HepG2 (cell line): ENCODE measurements at regions of chr4 and their contacts with region 1.

Region 1: GRCh38 chr4:153466081-153466948 is at the start of gene TMEM131L:
- DNase-seq: peak; percentile 29
- ATAC-seq: peak; percentile 88
- H3K4me3 ChIP-seq: peak within 1 kb of the TSS; percentile 77 to 89 (median 86)
- H3K27ac ChIP-seq: no peak within 1 kb of the TSS
- H3K4me1 ChIP-seq: peaks cover 26% of the 10 kb centered on the region
- H3K27me3 ChIP-seq: peaks cover 0 to 12% of the 10 kb centered on the region in 2 experiments; a peak in 3 of 5 replicates
- CTCF ChIP-seq: peak; percentile 23; the same call in 1 of the 2 replicates
- EP300 ChIP-seq: no peak
- POLR2A ChIP-seq: peak; percentile 50 to 53; a peak in 3 of 4 replicates
- RAD21 ChIP-seq: no peak
- total RNA-seq, gene TMEM131L: 2.4 and 4.5 TPM in 2 replicates

Region 2: DNA sequence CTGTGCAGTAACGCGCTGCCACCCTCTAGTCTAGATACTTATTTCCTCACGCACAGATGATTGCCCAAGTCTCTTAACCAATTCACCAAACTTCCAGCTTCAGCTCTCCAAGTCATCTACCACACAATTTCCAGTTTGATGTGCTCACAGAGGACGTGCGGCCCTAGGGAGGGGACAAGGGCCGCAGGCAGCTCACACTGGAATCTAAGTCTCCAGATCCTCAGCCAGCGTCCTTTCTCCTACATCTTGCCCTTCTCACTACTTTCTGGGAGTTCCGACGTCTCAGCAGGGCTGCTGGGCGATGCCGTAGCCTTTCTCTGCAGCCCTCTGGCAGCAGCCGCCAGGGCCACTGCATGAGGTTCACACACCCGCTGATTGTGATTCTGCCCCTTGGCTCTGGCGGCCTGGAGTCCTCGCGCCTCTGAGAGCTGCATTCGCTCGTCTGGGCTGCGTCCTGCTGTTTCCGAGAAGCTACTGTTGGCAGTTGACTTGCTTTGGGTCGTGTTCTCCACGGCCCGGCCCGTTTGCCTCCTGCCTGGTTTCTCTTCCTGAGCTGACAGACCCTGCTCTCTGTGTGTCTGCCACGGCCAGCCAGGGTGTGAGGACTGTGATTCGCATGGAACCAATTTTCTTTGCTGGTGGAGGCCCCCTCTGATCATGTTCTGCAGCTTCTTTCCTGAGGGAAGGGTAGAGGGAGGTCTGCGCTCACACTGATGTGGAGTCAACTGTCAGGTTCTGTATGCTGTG is 14.2 kb before region 1 on chr4:
- CTCF ChIA-PET with region 1: no interaction called
- POLR2A ChIA-PET with region 1: interaction called, 13 read pairs
- in situ Hi-C with region 1: no loop called
- intact Hi-C with region 1: no loop called
- DNase-seq: no peak
- ATAC-seq: peak; percentile 86
- H3K4me3 ChIP-seq: peak overlapping the region in 1 of 3 experiments; percentile 41; a peak in 2 of 6 replicates
- H3K27ac ChIP-seq: no peak overlapping the region
- H3K4me1 ChIP-seq: peaks cover 37% of the 10 kb centered on the region
- H3K27me3 ChIP-seq: no peaks in the 10 kb centered on the region
- CTCF ChIP-seq: no peak
- EP300 ChIP-seq: no peak
- POLR2A ChIP-seq: peak in 1 of 2 experiments; percentile 24; a peak in 1 of 4 replicates
- RAD21 ChIP-seq: no peak

Region 3: DNA sequence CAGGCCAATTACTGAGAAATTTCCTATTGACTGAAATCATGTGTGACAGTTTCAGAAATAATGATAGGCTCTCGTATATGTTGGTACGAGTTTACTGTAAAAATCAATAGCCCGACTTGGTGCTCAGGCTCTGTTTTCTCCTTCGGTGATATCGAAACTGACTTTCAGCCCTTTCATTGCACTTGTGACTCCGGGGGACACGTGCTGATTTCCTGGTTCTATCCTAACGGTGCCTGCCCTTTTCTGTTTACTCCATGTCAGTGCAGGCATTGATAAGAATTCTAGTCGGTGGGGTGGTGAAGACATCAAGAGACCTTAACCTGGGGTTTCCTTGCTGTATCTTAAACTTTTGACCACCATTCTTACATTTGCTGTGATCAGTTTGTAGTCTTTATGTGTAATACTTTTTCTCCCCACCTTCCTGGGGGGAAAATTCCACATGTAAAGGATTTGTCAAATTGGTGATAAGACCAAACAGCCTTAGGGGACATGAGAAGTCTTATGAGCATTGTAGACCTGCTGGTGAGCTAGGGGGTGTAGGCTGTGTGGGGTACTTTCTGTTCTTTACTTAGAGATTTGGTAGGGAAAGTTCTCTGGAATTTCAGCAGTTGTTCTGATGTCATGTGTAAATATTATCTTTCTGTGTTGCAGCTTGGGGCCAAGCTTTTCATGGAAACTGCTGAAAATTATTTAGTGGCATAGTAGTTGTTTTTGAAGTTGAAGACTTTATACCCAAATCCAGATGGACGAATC is 52.5 kb after region 1 on chr4:
- CTCF ChIA-PET with region 1: no interaction called
- POLR2A ChIA-PET with region 1: no interaction called
- in situ Hi-C with region 1: no loop called
- intact Hi-C with region 1: loop called (anchors 5 kb)
- DNase-seq: peak; percentile 30
- ATAC-seq: peak; percentile 86
- H3K4me3 ChIP-seq: peak overlapping the region; percentile 29 to 40 (median 36); a peak in 5 of 6 replicates
- H3K27ac ChIP-seq: peak overlapping the region; percentile 48
- H3K4me1 ChIP-seq: peaks cover 30% of the 10 kb centered on the region
- H3K27me3 ChIP-seq: no peaks in the 10 kb centered on the region
- CTCF ChIP-seq: no peak
- EP300 ChIP-seq: no peak
- POLR2A ChIP-seq: no peak
- RAD21 ChIP-seq: no peak

Region 4: GRCh38 chr4:153555730-153556433 is 89.6 kb after region 1 on chr4:
- CTCF ChIA-PET with region 1: no interaction called
- POLR2A ChIA-PET with region 1: no interaction called
- in situ Hi-C with region 1: no loop called
- intact Hi-C with region 1: loop called (anchors 5 kb)
- DNase-seq: peak; percentile 48
- ATAC-seq: peak; percentile 54; the same call in 2 of the 3 replicates
- H3K4me3 ChIP-seq: no peak overlapping the region
- H3K27ac ChIP-seq: no peak overlapping the region
- H3K4me1 ChIP-seq: peaks cover 26% of the 10 kb centered on the region
- H3K27me3 ChIP-seq: no peaks in the 10 kb centered on the region
- CTCF ChIP-seq: no peak
- EP300 ChIP-seq: no peak
- POLR2A ChIP-seq: no peak
- RAD21 ChIP-seq: no peak